Calu3 (cell line): ENCODE measurements at regions of chr7 and their contacts with region 1.

Region 1: GRCh38 chr7:121547544-121548092 is 151.5 kb upstream of the FAM3C start:
- DNase-seq: no peak
- H3K4me3 Mint-ChIP-seq: no peak overlapping the region
- H3K27ac Mint-ChIP-seq: no peak overlapping the region
- H3K4me1 Mint-ChIP-seq: peaks cover 24% of the 10 kb centered on the region
- H3K27me3 Mint-ChIP-seq: no peaks in the 10 kb centered on the region
- CTCF ChIP-seq: peak; percentile 31

Region 2: DNA sequence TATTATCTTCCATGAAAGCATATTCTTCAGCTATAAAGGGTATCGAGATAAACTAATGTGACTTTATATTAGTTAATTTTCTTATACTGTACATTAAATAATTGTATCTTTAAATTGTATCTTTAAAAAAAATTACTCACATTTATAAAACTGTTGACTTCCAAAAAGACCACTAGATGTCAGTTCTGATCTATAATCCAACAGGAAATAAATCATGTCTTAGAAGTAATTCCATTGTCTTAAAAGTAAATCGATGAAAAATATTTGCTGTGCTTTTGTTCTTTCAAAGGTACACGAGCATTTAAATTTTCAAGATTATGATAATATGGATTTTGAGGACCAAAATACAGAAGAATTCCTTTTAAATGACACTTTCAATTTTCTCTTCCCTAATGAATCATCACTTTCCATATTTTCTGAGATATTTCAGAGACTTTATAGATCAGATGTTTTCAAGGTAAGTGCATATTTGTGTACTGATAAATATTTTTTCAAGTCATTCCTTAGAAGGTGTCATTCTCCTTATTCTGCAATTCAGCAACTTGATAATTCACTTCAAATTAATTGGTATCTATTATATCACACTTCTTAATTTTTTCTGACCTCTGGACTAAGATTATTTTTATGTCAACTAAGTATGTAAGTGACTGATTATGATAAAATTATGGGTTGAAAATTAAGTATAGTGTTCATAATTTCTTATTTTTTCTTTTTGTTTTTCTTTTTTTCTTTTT is 420.6 kb before region 1 on chr7:
- CTCF ChIA-PET with region 1: no interaction called
- intact Hi-C with region 1: loop called (anchors 1 kb)
- DNase-seq: no peak
- H3K4me3 Mint-ChIP-seq: no peak overlapping the region
- H3K27ac Mint-ChIP-seq: no peak overlapping the region
- H3K4me1 Mint-ChIP-seq: no peaks in the 10 kb centered on the region
- H3K27me3 Mint-ChIP-seq: no peaks in the 10 kb centered on the region
- CTCF ChIP-seq: no peak

Region 3: GRCh38 chr7:121395961-121396757 is 151.5 kb before region 1 on chr7 and contains the start of gene FAM3C:
- CTCF ChIA-PET with region 1: interaction called, 10 read pairs
- intact Hi-C with region 1: loop called (anchors 1 kb)
- DNase-seq: peak; percentile 97
- H3K4me3 Mint-ChIP-seq: peak within 1 kb of the TSS; percentile 80
- H3K27ac Mint-ChIP-seq: peak within 1 kb of the TSS; percentile 72
- H3K4me1 Mint-ChIP-seq: peaks cover 25% of the 10 kb centered on the region
- H3K27me3 Mint-ChIP-seq: no peaks in the 10 kb centered on the region
- CTCF ChIP-seq: peak; percentile 93
- total RNA-seq, gene FAM3C: 178 and 206 TPM in 2 replicates

Region 4: GRCh38 chr7:121459148-121459547 is 88.5 kb before region 1 on chr7:
- CTCF ChIA-PET with region 1: no interaction called
- intact Hi-C with region 1: no loop called
- DNase-seq: no peak
- H3K4me3 Mint-ChIP-seq: no peak overlapping the region
- H3K27ac Mint-ChIP-seq: no peak overlapping the region
- H3K4me1 Mint-ChIP-seq: no peaks in the 10 kb centered on the region
- H3K27me3 Mint-ChIP-seq: no peaks in the 10 kb centered on the region
- CTCF ChIP-seq: no peak

Region 5: GRCh38 chr7:121530227-121531174 is 17.1 kb before region 1 on chr7:
- CTCF ChIA-PET with region 1: interaction called, 6 read pairs
- intact Hi-C with region 1: loop called (anchors 1 kb)
- DNase-seq: peak; percentile 80
- H3K4me3 Mint-ChIP-seq: peak overlapping the region; percentile 55
- H3K27ac Mint-ChIP-seq: peak overlapping the region; percentile 98
- H3K4me1 Mint-ChIP-seq: peaks cover 32% of the 10 kb centered on the region
- H3K27me3 Mint-ChIP-seq: no peaks in the 10 kb centered on the region
- CTCF ChIP-seq: no peak

Region 6: DNA sequence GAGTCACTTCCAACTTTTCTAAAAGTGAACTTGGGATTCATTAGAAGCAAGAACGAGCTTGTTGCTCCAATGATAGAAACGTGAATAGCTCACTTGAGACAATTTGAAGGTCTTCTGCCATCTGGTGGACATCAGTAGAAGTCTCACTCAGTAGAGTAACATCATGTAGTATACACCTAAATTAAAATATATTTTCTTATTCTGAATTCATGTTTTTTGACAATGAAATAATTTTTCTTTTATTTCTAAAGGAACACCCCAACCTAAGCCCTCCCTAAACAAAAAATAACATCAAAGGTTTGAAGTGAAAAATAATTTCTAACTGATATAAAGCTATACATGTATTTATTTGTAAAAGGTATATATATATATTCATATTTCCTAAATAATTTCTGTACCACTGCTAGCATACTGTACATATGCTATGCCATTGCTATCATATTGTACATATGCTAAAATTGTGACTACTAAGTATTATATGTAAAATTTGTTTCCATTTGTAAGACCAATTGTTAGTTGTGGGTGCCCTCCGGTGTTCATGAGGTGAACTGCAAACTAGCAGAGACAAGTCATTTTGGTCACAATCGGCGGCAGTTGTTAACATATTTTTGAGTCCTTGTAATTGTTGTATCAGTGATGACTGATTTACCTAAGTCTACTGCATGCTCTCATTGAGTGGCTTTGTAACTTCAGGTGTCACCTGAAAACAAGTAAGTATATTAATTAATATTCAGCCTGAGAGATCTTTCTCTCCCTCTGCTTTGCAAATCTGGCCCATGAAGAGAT is 447.2 kb after region 1 on chr7:
- CTCF ChIA-PET with region 1: interaction called, 6 read pairs
- intact Hi-C with region 1: loop called (anchors 1 kb)
- DNase-seq: peak; percentile 74
- H3K4me3 Mint-ChIP-seq: no peak overlapping the region
- H3K27ac Mint-ChIP-seq: no peak overlapping the region
- H3K4me1 Mint-ChIP-seq: no peaks in the 10 kb centered on the region
- H3K27me3 Mint-ChIP-seq: no peaks in the 10 kb centered on the region
- CTCF ChIP-seq: peak; percentile 68